Dendritic cell treated with granulocyte-macrophage colony-stimulating factor and Interleukin-4, amounts not matched to agents 40 ng/mL and 50 ng/mL, for 4 days (primary cell): ENCODE measurements at regions of chrX and their contacts with region 1.

Region 1: GRCh38 chrX:81195712-81196111 is 6.0 kb downstream of the HMGN5 start:
- H3K4me3 Mint-ChIP-seq: no peak overlapping the region
- H3K27ac Mint-ChIP-seq: no peak overlapping the region
- H3K4me1 Mint-ChIP-seq: peaks cover 14% of the 10 kb centered on the region
- H3K27me3 Mint-ChIP-seq: no peaks in the 10 kb centered on the region

Region 2: DNA sequence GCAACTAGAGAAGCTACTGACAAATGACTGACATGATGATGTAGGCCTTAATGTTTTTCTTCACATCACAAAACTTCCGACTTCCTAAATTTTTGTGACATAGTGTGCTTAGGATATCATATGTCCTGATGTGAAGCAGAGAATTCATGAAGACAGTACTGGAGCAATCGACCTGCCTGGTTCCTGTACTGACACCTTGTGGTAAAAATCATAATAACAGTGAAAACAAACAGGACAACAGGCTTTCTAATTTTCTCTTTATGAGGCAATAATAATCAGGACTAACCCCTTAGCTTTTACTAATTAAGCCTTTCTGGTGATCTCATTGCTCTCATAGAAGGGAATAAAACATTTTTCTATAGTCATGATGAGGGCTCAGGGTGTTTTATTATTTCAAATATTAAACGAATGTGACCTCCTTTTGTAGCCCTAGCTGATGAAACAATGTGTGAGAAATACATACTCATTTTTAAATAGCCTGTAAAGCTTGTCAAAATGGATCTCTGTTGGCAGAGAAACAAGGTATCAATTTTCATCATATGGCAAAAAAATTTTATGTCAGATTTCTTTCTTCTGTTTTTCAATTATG is 617.1 kb before region 1 on chrX:
- intact Hi-C with region 1: no loop called
- H3K4me3 Mint-ChIP-seq: no peak overlapping the region
- H3K27ac Mint-ChIP-seq: no peak overlapping the region
- H3K4me1 Mint-ChIP-seq: no peaks in the 10 kb centered on the region
- H3K27me3 Mint-ChIP-seq: no peaks in the 10 kb centered on the region

Region 3: GRCh38 chrX:81121513-81122382 is 74.0 kb before region 1 on chrX:
- intact Hi-C with region 1: loop called (anchors 5 kb)
- H3K4me3 Mint-ChIP-seq: peak overlapping the region; percentile 96
- H3K27ac Mint-ChIP-seq: peak overlapping the region; percentile 78
- H3K4me1 Mint-ChIP-seq: peaks cover 6% of the 10 kb centered on the region
- H3K27me3 Mint-ChIP-seq: peaks cover 10% of the 10 kb centered on the region

Region 4: GRCh38 chrX:81174286-81174685 is 21.4 kb before region 1 on chrX:
- intact Hi-C with region 1: loop called (anchors 2 kb)
- H3K4me3 Mint-ChIP-seq: no peak overlapping the region
- H3K27ac Mint-ChIP-seq: no peak overlapping the region
- H3K4me1 Mint-ChIP-seq: no peaks in the 10 kb centered on the region
- H3K27me3 Mint-ChIP-seq: no peaks in the 10 kb centered on the region